ENCODE measurements at regions of chr7 and their contacts with region 1.

Region 1: GRCh38 chr7:5193880-5194279 is 3.8 kb downstream of the WIPI2 start:
- DNase-seq: no peak
- H3K4me3 Mint-ChIP-seq: no peak overlapping the region
- H3K27ac Mint-ChIP-seq: no peak overlapping the region
- H3K4me1 Mint-ChIP-seq: peaks cover 26% of the 10 kb centered on the region
- H3K27me3 Mint-ChIP-seq: no peaks in the 10 kb centered on the region

Region 2: GRCh38 chr7:5139998-5140397 is 53.9 kb before region 1 on chr7:
- CTCF ChIA-PET with region 1: interaction called, 4 read pairs
- intact Hi-C with region 1: loop called (anchors 5 kb)
- DNase-seq: peak; percentile 47
- H3K4me3 Mint-ChIP-seq: no peak overlapping the region
- H3K27ac Mint-ChIP-seq: no peak overlapping the region
- H3K4me1 Mint-ChIP-seq: peaks cover 10% of the 10 kb centered on the region
- H3K27me3 Mint-ChIP-seq: no peaks in the 10 kb centered on the region